MCF 10A (cell line): ENCODE measurements at regions of chr7 and their contacts with region 1.

Region 1: DNA sequence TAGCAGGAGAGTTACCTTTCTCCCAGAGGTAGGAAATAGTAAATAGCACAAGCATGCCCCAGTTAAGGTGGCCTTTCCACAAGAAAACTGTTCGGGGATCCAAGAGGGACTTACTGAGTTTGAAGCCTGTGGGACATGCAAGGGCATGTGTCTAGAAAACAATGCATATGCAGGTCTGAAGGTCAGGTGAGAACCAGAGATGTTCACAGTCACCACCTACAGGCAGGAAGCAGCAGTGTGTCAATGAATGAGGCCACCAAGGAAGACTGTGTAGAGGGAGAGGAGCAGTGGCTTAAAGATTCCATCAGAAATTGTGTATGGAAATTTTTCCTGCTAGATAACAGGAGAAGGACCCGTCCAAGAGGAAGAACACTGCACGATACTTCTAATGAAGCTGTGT is 66.0 kb downstream of the CALD1 start:
- DNase-seq: peak; percentile 66
- H3K4me3 Mint-ChIP-seq: peak overlapping the region; percentile 30
- H3K27ac Mint-ChIP-seq: peak overlapping the region; percentile 92
- H3K4me1 Mint-ChIP-seq: peaks cover 14% of the 10 kb centered on the region
- H3K27me3 Mint-ChIP-seq: no peaks in the 10 kb centered on the region
- CTCF ChIP-seq: peak; percentile 43

Region 2: GRCh38 chr7:134724606-134725005 is 120.9 kb before region 1 on chr7:
- CTCF ChIA-PET with region 1: interaction called, 36 read pairs
- POLR2A ChIA-PET with region 1: no interaction called
- intact Hi-C with region 1: loop called (anchors 1 kb)
- DNase-seq: peak; percentile 65
- H3K4me3 Mint-ChIP-seq: no peak overlapping the region
- H3K27ac Mint-ChIP-seq: no peak overlapping the region
- H3K4me1 Mint-ChIP-seq: no peaks in the 10 kb centered on the region
- H3K27me3 Mint-ChIP-seq: no peaks in the 10 kb centered on the region
- CTCF ChIP-seq: peak; percentile 67

Region 3: GRCh38 chr7:134811765-134812164 is 33.7 kb before region 1 on chr7:
- CTCF ChIA-PET with region 1: no interaction called
- POLR2A ChIA-PET with region 1: no interaction called
- intact Hi-C with region 1: no loop called
- DNase-seq: no peak
- H3K4me3 Mint-ChIP-seq: no peak overlapping the region
- H3K27ac Mint-ChIP-seq: peak overlapping the region; percentile 47
- H3K4me1 Mint-ChIP-seq: peaks cover 5% of the 10 kb centered on the region
- H3K27me3 Mint-ChIP-seq: no peaks in the 10 kb centered on the region
- CTCF ChIP-seq: no peak

Region 4: GRCh38 chr7:135186841-135187253 is 341.4 kb after region 1 on chr7:
- CTCF ChIA-PET with region 1: no interaction called
- POLR2A ChIA-PET with region 1: no interaction called
- intact Hi-C with region 1: no loop called
- DNase-seq: no peak
- H3K4me3 Mint-ChIP-seq: no peak overlapping the region
- H3K27ac Mint-ChIP-seq: no peak overlapping the region
- H3K4me1 Mint-ChIP-seq: no peaks in the 10 kb centered on the region
- H3K27me3 Mint-ChIP-seq: no peaks in the 10 kb centered on the region
- CTCF ChIP-seq: no peak